Cardiac septum (tissue), 1 donor: ENCODE measurements at regions of chr1 and their contacts with region 1.

Region 1: GRCh38 chr1:25743826-25744581 is 56.0 kb upstream of the SELENON start:
- DNase-seq: no peak

Region 2: DNA sequence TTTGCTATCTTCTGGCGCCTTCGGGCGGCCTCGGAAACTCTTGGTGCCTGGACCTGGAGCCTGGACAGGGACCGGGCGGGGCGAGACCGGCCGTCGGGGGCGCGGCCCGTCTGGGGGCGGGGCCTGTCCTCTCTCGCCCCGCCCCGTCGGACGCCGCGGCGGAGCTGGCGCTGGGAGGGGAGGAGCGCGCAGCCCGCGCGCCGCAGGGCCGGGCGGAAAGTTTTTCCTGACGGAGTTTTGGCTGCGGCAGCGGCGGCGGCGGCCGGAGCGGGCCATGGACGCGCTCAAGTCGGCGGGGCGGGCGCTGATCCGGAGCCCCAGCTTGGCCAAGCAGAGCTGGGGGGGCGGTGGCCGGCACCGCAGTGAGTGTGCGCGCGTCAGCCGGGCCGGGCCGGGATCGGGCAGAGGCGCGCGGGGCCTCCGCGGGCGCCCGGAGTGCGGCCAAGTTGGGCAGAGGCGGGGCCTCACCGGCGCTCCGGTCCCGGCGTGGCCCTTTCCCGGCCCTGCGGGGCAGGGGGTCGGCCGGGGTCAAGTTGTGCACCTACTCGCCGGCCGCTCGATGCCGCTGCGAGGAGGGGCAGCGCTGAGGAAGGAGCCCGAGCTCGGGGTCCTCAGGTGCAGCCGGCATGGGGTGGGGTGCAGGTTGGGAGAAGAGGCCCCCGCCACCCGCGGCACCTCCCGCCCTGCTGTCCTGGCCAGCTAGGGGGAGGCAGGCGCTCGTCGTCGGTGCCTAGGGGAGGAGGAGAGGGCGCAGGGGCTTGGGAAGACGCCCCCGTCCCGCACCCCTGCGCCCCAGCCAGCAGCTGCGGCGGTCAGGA is 200.4 kb before region 1 on chr1 and contains the start of gene LDLRAP1:
- intact Hi-C with region 1: loop called (anchors 5 kb)
- DNase-seq: peak; percentile 89
- total RNA-seq, gene LDLRAP1: 14.4 TPM

Region 3: GRCh38 chr1:25608488-25609178 is 135.4 kb before region 1 on chr1:
- intact Hi-C with region 1: loop called (anchors 2 kb)
- DNase-seq: peak; percentile 88

Region 4: DNA sequence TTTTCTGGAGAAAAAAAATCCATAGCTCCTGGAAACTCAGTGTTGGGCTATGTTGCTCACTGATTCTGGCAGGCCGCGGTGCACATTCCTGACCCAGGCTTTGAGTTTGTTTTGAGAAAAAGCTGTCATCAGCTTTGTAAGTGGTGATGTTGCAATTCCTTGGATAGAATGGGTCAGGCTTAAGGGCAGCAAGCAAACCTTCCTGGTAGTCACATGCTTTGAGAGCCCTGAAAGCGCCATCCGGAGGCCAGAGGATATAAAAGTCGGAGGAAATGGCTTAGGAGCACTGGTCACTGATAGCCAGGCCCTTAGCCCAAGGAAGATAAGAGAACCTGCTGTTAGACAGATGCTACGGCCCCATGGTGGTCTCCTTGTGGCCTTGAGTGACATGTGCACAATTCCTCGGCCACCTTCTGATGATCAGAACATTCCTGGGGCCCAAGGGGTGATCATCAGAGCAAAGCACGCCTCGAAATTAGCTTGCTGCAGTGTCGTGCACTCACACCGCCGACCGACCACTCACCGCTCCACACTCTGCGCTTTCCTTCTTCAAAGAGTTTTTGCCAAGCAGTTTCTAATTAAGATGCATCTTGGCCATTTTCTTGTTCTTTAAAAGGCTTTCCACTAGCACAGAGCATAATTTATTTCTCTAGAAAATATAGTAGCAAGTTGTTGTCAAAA is 48.8 kb before region 1 on chr1:
- intact Hi-C with region 1: loop called (anchors 2 kb)
- DNase-seq: peak; percentile 80